ENCODE measurements at regions of chr14 and their contacts with region 1.

Region 1: DNA sequence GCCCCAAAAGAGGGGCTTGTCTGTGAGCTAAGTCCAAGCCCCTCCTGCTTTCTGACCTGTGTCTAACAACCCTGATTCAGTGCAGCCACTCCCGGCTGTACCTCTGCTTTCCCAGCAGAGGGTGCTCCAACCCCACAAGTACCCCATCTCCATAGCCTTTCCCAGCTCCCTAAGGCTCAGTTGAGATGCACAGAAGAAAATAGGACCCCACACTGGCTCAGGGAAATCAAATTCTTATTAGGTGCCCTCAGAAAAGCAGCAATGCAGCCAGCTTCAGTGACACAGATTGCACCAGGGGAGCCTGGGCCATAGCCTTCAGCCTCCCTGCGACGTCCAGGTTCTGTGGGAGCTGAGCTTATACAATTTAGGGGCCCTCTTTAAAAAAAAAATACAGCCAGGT is 49.9 kb downstream of the LRRC74A start:
- DNase-seq: peak in 1 of 2 donors; percentile 81
- ATAC-seq: peak; percentile 84
- H3K4me3 ChIP-seq: no peak overlapping the region
- H3K27ac ChIP-seq: no peak overlapping the region
- H3K4me1 ChIP-seq: no peaks in the 10 kb centered on the region
- H3K27me3 ChIP-seq: no peaks in the 10 kb centered on the region

Region 2: DNA sequence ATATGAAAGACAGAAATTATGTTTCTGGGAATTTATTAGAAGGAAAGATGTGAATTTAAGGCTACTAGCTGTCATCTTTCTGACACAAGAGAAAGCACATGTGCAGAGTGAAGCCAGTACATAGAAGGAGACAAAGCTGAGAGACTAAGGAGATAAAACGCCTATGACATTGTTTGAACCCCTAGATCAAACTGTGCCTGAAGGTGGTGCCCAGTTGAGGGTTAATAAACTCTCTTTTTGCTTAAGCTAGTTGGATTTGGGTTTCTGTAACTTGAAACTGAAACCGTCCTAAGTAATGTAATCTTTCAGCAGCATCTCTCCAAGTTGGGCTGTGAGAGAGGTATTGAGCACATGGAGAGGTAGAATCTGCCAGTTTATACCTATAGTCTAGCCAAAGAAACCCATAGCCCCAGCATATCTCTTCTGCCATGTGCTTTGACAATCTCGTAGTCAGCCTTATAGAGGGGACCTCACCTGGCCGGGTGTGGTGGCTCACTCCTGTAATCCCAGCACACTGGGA is 34.4 kb after region 1 on chr14:
- intact Hi-C with region 1: loop called (anchors 1 to 5 kb)
- DNase-seq: no peak
- ATAC-seq: no peak
- H3K4me3 ChIP-seq: no peak overlapping the region
- H3K27ac ChIP-seq: no peak overlapping the region
- H3K4me1 ChIP-seq: no peaks in the 10 kb centered on the region
- H3K27me3 ChIP-seq: no peaks in the 10 kb centered on the region

Region 3: GRCh38 chr14:76926521-76927251 is 50.6 kb after region 1 on chr14:
- intact Hi-C with region 1: no loop called
- DNase-seq: peak in 1 of 2 donors; percentile 75
- ATAC-seq: peak; percentile 69
- H3K4me3 ChIP-seq: no peak overlapping the region
- H3K27ac ChIP-seq: no peak overlapping the region
- H3K4me1 ChIP-seq: no peaks in the 10 kb centered on the region
- H3K27me3 ChIP-seq: no peaks in the 10 kb centered on the region

Region 4: DNA sequence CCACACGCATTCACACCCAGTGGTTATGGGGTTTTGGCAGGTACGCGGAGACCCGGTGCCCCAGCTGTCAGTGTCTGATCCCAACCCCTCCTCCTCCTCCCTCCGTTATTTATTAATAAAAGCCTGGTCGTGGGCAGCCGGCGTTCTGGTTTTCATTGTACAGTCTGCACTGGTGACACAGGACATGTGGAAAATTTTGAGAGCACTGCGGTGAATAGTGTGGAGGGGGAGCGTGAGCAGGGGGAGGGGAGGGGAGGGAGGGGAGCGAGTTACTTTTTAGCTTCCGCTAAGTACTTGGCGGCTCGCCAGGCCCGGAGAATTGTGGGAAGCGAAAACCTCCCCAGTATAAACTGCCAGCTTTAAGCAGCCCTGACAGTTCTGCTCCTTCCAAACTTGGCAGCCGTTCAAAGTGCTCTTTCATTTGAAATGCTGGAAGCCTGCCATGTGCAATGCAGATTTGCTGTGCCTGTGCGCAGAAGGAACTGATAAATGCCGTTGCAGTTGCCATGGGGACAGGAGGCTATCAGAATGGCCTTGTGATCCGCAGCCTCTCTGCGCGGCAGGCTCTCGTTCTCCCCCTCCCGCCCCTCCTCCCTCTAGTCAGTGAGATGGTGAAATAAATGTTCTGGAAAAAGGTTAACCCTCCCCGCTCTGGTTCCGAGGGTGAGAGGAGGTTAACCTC is 164.1 kb after region 1 on chr14:
- intact Hi-C with region 1: no loop called
- DNase-seq: peak; percentile 100
- ATAC-seq: peak; percentile 90
- H3K4me3 ChIP-seq: peak overlapping the region in 1 of 2 donors; percentile 32
- H3K27ac ChIP-seq: peak overlapping the region; percentile 38 to 94
- H3K4me1 ChIP-seq: peaks cover 8 to 11% of the 10 kb centered on the region in 2 donors
- H3K27me3 ChIP-seq: no peaks in the 10 kb centered on the region

Region 5: GRCh38 chr14:77067632-77068514 is 191.8 kb after region 1 on chr14:
- intact Hi-C with region 1: loop called (anchors 1 to 2 kb)
- DNase-seq: peak; percentile 78 to 90
- ATAC-seq: peak; percentile 80
- H3K4me3 ChIP-seq: no peak overlapping the region
- H3K27ac ChIP-seq: no peak overlapping the region
- H3K4me1 ChIP-seq: no peaks in the 10 kb centered on the region
- H3K27me3 ChIP-seq: no peaks in the 10 kb centered on the region

Region 6: DNA sequence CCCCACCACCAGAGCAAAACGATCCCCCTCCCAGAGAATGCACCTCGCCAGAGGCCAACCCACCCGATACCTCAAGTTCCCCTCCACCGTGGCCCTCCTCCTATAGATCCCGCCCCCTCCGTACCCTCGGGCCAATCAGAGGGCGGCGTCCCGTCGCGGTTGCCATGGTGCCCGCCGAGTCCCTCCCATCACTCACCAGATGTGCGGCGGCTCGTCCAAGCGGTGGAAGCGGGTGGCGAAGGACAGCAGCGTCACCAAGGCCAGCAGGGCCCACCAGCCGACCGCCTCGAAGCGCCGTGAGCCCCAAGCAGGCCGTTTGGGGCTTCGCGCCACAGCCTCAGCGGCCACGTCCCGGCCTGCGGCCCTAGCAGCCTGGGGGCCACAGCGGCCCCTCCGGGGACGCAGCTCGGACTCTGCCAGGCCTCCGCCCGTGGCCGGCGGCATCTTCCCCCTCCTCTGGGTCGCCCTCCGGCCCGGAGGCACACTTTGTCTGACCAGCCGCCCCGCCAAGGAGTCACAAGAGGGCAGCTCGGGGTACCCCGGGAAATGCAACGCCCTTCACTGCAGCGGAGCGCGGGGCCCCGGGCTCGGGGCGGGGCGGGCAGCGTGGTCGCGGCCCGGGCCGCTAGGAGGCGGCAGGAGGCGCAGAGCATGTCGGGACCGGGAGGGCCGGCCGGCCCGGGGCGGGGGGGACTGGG is 444.3 kb after region 1 on chr14 and contains the start of gene POMT2:
- intact Hi-C with region 1: loop called in 1 of 2 experiments (anchors 5 kb)
- DNase-seq: peak; percentile 96 to 97
- ATAC-seq: peak; percentile 90
- H3K4me3 ChIP-seq: peak within 1 kb of the TSS; percentile 87 to 93
- H3K27ac ChIP-seq: peak within 1 kb of the TSS; percentile 49 to 94
- H3K4me1 ChIP-seq: no peaks in the 10 kb centered on the region
- H3K27me3 ChIP-seq: no peaks in the 10 kb centered on the region
- total RNA-seq, gene POMT2: 15.6 to 23.4 TPM

Measured in aorta (tissue), 5 donors.